ENCODE measurements at regions of chr12 and their contacts with region 1.

Region 1: DNA sequence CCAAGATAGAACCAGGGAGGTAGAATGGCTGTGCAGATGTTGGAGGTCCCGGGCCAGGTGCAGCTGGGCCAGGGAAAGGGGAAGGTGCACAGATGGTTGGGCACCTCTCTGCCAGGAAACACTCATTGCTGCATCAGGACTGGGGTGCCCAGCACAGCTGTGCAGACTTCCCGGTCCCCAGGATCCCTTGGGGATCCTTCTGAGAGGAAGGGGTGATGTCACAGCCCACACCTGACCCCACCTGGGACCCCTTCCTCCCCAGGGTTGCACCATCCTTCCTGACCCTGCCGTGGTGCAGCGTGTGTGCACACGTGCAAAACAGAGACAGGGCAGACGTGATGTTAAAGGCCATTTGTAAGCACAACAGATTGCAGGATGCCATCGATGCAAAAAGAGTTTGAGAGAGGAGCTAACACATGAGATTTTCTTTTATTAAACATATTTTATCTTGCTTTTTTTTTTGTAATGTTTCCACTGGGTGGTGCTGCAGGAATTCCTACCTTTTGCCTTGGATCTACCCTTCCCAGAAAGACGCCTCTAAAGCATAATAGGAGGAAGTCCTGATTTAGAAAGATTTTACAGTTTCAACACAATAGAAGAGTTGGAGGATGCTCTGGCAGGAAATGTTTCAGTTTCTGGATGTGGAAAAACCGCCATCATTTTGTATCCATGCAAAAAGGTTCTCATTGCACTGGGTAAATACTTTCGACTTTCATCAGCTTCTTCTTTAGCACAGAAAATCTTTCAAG is 14.8 kb downstream of the ELK3 start:
- DNase-seq: no peak
- H3K4me3 ChIP-seq: no peak overlapping the region
- H3K4me3 Mint-ChIP-seq: peak overlapping the region; percentile 57 to 96 (median 86)
- H3K27ac ChIP-seq: peak overlapping the region; percentile 62
- H3K27ac Mint-ChIP-seq: peak overlapping the region; percentile 92 to 100 (median 98)
- H3K4me1 ChIP-seq: peaks cover 100% of the 10 kb centered on the region
- H3K4me1 Mint-ChIP-seq: peaks cover 82 to 100% (median 92%) of the 10 kb centered on the region in 4 donors
- H3K27me3 ChIP-seq: no peaks in the 10 kb centered on the region
- H3K27me3 Mint-ChIP-seq: no peaks in the 10 kb centered on the region

Region 2: DNA sequence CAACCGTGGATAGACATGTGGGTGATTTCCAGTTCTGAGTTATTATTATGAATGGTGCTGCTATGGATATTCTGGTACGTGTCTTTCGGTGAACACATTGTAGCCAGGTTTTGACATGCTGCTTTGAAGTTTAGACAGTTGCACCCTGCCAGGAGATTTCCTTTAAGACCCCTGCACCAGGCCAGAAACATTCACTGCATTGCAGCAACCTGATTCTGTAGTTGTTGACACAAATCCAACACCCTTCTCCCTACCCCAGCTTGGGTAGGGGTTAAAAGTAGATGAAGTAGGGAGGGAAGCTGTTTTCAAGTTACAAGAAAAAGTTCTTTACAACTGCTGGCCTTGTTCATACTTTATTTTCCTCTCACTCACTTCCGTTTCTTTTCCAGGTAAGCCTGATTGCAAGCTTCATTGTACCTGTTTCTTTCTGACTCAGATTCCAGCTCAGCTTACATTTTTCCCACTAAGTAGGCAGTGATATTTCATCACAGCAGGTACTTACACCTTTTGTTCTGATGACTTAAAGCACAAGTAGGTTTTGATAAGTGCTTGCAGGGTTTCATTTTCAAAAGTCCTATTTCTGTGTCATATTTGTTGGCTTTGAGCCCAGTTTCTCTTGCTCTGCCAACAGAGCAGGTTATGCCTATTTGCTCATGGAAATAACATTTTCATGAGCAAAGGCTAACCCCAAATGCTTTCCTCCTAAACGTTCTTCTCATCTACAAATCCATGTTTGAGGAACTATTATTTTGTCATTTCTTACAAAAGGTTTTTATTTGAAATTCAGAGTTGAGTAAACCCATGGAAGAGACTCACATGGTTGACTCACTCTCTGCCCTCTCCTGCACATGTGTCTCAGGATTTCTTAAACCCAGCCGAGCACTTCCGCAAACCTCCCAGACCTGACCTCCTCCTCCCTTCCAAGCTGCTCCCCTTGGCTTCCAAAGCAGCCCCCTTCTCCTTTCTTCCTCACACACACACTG is 161.5 kb before region 1 on chr12:
- CTCF ChIA-PET with region 1: no interaction called
- POLR2A ChIA-PET with region 1: no interaction called
- intact Hi-C with region 1: no loop called
- DNase-seq: peak in 4 of 5 donors; percentile 36 to 51 (median 38)
- H3K4me3 ChIP-seq: peak overlapping the region in 1 of 2 donors; percentile 15
- H3K4me3 Mint-ChIP-seq: peak overlapping the region; percentile 50 to 84 (median 78)
- H3K27ac ChIP-seq: peak overlapping the region; percentile 37
- H3K27ac Mint-ChIP-seq: peak overlapping the region; percentile 77 to 97 (median 90)
- H3K4me1 ChIP-seq: peaks cover 47% of the 10 kb centered on the region
- H3K4me1 Mint-ChIP-seq: peaks cover 38 to 54% (median 46%) of the 10 kb centered on the region in 4 donors
- H3K27me3 ChIP-seq: no peaks in the 10 kb centered on the region
- H3K27me3 Mint-ChIP-seq: no peaks in the 10 kb centered on the region

Region 3: GRCh38 chr12:96194971-96195844 is 13.8 kb before region 1 on chr12:
- CTCF ChIA-PET with region 1: interaction called, 149 read pairs
- POLR2A ChIA-PET with region 1: interaction called, 233 read pairs
- intact Hi-C with region 1: loop called (anchors 1 kb)
- DNase-seq: peak; percentile 72 to 94 (median 76)
- H3K4me3 ChIP-seq: peak overlapping the region; percentile 85 to 90
- H3K4me3 Mint-ChIP-seq: peak overlapping the region; percentile 93 to 100 (median 98)
- H3K27ac ChIP-seq: peak overlapping the region; percentile 95
- H3K27ac Mint-ChIP-seq: peak overlapping the region; percentile 96 to 100 (median 97)
- H3K4me1 ChIP-seq: peaks cover 52% of the 10 kb centered on the region
- H3K4me1 Mint-ChIP-seq: peaks cover 34 to 62% (median 42%) of the 10 kb centered on the region in 4 donors
- H3K27me3 ChIP-seq: no peaks in the 10 kb centered on the region
- H3K27me3 Mint-ChIP-seq: no peaks in the 10 kb centered on the region